Gastrocnemius medialis (tissue), 4 donors: ENCODE measurements at regions of chr18 and their contacts with region 1.

Region 1: DNA sequence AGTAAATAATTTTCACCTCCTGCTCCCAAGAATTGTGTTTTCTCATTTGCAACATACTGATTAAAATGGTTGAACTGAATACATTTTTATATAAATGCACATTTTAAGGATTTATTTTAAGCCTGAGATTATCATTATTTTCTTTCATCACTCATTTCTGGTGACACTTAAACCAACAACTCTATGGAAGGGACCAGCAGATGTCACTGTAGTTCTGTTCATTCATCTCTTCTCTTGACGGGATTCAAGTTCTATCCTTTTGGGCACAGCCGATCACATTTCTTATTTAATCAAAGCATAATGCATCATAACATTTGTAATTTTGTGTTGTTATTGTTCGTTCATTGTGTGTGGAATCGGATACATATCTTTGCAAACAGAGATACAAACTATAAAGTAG is 417.9 kb downstream of the HRH4 start:
- DNase-seq: no peak
- ATAC-seq: peak in 1 of 2 donors; percentile 50
- H3K4me3 ChIP-seq: no peak overlapping the region
- H3K27ac ChIP-seq: no peak overlapping the region
- H3K4me1 ChIP-seq: no peaks in the 10 kb centered on the region
- H3K27me3 ChIP-seq: no peaks in the 10 kb centered on the region
- CTCF ChIP-seq: peak; percentile 30 to 56 (median 55)
- POLR2A ChIP-seq: no peak

Region 2: GRCh38 chr18:25062720-25063119 is 184.4 kb after region 1 on chr18:
- in situ Hi-C with region 1: no loop called
- intact Hi-C with region 1: loop called (anchors 10 kb)
- DNase-seq: no peak
- ATAC-seq: no peak
- H3K4me3 ChIP-seq: no peak overlapping the region
- H3K27ac ChIP-seq: no peak overlapping the region
- H3K4me1 ChIP-seq: no peaks in the 10 kb centered on the region
- H3K27me3 ChIP-seq: no peaks in the 10 kb centered on the region
- CTCF ChIP-seq: no peak
- POLR2A ChIP-seq: no peak

Region 3: GRCh38 chr18:25446972-25447371 is 568.7 kb after region 1 on chr18:
- in situ Hi-C with region 1: no loop called
- intact Hi-C with region 1: no loop called
- DNase-seq: no peak
- ATAC-seq: no peak
- H3K4me3 ChIP-seq: no peak overlapping the region
- H3K27ac ChIP-seq: no peak overlapping the region
- H3K4me1 ChIP-seq: no peaks in the 10 kb centered on the region
- H3K27me3 ChIP-seq: no peaks in the 10 kb centered on the region
- CTCF ChIP-seq: no peak
- POLR2A ChIP-seq: no peak

Region 4: DNA sequence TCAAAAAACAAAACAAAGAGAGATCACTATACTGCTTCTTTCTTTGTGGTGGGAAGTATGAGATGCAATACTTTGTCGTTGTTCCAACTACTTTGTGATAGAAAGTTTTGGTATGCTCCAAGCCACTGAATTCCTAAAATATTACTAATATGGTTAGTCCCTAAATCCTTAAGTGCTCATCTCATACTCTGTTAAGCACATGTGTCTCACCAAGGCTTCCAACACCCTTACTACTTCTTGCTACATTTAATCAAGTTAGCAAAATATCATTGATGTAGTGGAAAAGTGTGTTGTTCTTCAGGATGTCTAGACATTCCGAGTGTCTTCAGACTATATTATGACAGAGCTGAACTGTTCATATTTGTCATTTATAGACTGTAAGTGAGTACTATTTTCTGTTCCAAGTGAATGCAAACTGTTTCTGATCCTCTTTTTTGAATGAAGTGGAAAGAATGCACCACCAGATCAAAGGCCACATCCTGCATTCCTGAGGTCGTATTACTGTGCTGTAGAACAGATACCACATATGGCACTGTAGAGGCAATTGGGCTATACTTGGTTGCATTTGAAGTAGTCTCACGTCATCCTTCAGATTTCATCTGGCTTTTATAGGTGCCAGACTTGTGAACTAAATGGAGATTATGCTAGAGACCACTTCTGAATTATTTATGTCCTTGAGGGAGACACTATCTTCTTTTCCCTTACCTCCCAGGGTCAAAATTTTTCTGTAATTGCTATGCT is 772.1 kb after region 1 on chr18:
- in situ Hi-C with region 1: loop called in 1 of 4 experiments (anchors 25 kb)
- intact Hi-C with region 1: no loop called
- DNase-seq: no peak
- ATAC-seq: no peak
- H3K4me3 ChIP-seq: no peak overlapping the region
- H3K27ac ChIP-seq: no peak overlapping the region
- H3K4me1 ChIP-seq: no peaks in the 10 kb centered on the region
- H3K27me3 ChIP-seq: no peaks in the 10 kb centered on the region
- CTCF ChIP-seq: no peak
- POLR2A ChIP-seq: no peak

Region 5: GRCh38 chr18:25832001-25832604 is 953.8 kb after region 1 on chr18:
- in situ Hi-C with region 1: loop called in 1 of 4 experiments (anchors 25 kb)
- intact Hi-C with region 1: no loop called
- DNase-seq: peak; percentile 12 to 39
- ATAC-seq: peak; percentile 34 to 71
- H3K4me3 ChIP-seq: no peak overlapping the region
- H3K27ac ChIP-seq: no peak overlapping the region
- H3K4me1 ChIP-seq: peaks cover 0 to 4% of the 10 kb centered on the region in 2 donors
- H3K27me3 ChIP-seq: no peaks in the 10 kb centered on the region
- CTCF ChIP-seq: peak; percentile 32 to 67 (median 61)
- POLR2A ChIP-seq: no peak

Region 6: GRCh38 chr18:25896178-25896780 is 1018.0 kb after region 1 on chr18:
- in situ Hi-C with region 1: loop called in 2 of 4 experiments (anchors 5 to 10 kb)
- intact Hi-C with region 1: loop called (anchors 2 kb)
- DNase-seq: peak in 1 of 2 donors; percentile 8
- ATAC-seq: peak in 1 of 2 donors; percentile 47
- H3K4me3 ChIP-seq: no peak overlapping the region
- H3K27ac ChIP-seq: no peak overlapping the region
- H3K4me1 ChIP-seq: no peaks in the 10 kb centered on the region
- H3K27me3 ChIP-seq: no peaks in the 10 kb centered on the region
- CTCF ChIP-seq: peak; percentile 48 to 79 (median 57)
- POLR2A ChIP-seq: no peak